Sciatic nerve (tissue), 2 donors: ENCODE measurements at regions of chr2 and their contacts with region 1.

Region 1: DNA sequence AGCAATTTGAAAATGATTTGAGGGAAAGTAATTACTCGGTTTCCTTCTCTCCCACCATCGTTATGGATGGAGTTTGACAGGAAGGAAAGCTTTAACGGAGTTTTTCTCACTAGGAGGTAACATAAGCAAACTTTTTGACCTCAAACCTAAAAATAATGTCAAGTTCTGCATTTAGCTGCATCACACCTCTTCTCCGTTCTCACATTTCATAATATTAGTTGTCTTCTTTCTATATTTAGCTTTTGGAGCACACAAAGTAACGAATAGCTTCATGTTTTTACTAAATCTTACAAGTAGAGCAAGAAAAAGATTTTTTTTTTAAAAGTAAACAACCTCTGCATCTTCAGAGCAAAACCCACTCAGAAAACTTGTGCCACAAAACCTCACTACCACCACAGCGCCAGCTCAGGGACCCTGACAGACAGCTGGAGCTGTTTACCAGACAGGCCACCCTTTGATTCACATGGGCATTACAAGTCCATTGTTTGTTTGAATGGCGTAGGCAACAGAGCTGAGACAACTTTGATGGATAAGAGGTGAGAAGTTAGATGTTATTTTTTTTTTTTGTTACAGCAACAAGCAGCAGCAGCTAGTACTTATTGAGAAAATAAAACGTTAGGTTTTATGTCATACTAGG is 21.9 kb upstream of the ICOS start:
- DNase-seq: no peak
- ATAC-seq: no peak

Region 2: DNA sequence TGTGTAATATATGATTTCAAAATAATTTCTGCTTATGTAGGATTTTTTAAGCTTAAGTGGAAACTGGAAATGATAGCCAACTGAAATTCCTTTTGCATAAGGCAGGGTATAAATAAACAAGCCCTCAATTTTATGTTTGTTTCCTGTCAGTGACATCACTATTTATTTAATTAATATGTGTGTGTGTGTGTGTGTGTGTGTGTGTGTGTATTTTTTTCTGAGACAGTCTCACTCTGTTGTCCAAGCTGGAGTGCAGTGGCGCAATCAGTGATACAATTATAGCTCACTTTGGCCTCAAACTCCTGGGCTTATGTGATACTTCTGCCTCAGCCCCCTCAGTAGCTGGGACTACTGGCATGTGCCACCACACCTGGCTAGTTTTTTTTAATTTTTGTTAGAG is 705.1 kb before region 1 on chr2:
- intact Hi-C with region 1: loop called (anchors 5 kb)
- DNase-seq: no peak
- ATAC-seq: no peak

Region 3: DNA sequence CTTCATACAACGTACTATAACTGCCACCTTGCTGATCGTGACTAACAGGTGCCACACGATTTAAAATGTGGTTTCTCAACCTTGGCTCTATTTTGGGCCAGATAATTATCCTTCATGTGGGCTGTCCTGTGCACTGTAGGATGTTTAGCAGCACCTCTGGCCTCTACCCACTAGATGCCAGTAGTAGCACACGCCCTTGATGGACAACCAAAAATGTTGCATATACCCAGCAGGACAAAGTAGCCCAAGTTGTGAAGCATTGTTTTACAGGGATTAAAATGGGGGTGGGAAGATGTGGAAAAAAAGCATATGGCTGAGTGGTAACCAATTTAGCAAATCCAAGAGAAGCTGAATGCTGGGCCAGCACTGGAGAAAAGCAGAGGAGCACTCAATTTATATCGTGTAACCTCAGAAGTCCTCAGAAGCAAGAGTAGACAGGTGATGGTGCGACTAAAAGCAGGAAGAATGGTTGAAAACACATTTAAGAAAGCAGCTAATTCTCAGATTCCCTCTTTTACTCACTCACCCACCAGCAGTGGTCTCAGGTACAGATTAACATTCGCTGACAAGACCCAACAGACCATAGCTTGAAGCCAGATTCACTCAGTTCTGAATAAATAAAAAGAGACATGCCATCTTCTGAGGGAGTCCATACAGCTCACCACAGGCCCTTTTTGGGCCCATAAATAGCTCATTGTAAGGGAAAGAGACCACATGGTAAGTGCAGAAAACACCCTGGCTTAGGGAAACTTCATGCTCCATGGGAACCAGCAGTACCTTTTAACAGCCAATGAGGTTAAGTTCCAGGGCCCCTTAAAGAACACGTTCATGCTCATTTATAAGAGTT is 430.2 kb before region 1 on chr2:
- intact Hi-C with region 1: no loop called
- DNase-seq: no peak
- ATAC-seq: peak; percentile 87